K562 (cell line): ENCODE measurements at regions of chr14 and their contacts with region 1.

Region 1: DNA sequence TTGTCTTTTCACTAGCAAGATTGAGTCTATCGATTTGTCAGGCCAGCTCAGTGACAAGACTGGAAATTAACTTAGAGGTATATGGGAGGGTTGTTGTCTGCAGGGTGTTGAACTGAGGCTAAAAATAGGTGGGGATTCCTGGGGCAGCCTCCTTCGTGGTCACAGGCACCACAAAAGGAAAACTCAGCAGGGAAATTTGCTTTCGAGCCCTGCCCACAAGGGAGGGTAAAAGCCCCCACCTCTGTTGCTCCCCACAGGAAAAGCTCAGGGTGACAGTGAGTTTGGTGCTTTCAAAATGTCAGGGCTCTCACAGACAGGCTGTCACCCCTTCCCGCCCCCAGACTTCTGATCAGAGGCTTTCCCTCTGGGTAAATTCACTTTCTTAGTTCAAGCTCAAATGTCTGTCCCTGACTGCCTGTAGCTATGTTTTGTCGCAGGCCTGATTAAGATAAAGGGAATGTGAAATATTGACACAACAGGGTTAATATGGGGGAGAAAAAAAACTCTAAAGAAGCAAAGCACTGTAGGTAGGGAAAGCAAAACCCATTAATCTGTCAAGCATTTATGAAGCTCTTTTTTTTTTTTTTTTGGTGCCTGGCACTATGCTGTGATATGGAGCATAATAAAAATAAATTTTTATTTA is 11.7 kb upstream of the NFKBIA start:
- DNase-seq: no peak
- ATAC-seq: no peak
- H3K4me3 ChIP-seq: no peak overlapping the region
- H3K27ac ChIP-seq: no peak overlapping the region
- H3K4me1 ChIP-seq: peaks cover 0 to 4% of the 10 kb centered on the region in 2 experiments; a peak in 3 of 5 replicates
- H3K27me3 ChIP-seq: no peaks in the 10 kb centered on the region
- CTCF ChIP-seq: no peak
- EP300 ChIP-seq: no peak
- POLR2A ChIP-seq: no peak
- RAD21 ChIP-seq: no peak

Region 2: DNA sequence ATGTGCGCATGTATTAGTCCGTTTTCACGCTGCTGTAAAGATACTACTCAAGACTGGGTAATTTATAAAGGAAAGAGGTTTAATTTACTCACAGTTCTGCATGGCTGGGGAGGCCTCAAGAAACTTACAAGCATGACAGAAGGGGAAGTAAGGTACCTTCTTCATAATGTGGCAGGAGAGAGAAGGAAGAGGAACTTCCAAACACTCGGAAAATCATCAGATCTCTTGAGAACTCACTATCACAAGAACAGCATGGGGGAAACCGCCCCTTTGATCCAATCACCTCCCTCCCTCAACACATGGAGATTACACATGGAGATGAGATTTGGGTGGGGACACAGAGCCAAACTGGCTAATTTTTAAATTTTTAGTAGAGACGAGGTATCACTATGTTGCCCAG is 744.5 kb before region 1 on chr14:
- CTCF ChIA-PET with region 1: no interaction called
- POLR2A ChIA-PET with region 1: no interaction called
- in situ Hi-C with region 1: no loop called
- intact Hi-C with region 1: loop called (anchors 5 kb)
- DNase-seq: no peak
- ATAC-seq: no peak
- H3K4me3 ChIP-seq: no peak overlapping the region
- H3K27ac ChIP-seq: no peak overlapping the region
- H3K4me1 ChIP-seq: no peaks in the 10 kb centered on the region; a peak in 1 of 5 replicates
- H3K27me3 ChIP-seq: no peaks in the 10 kb centered on the region
- CTCF ChIP-seq: no peak
- EP300 ChIP-seq: no peak
- POLR2A ChIP-seq: no peak
- RAD21 ChIP-seq: no peak

Region 3: DNA sequence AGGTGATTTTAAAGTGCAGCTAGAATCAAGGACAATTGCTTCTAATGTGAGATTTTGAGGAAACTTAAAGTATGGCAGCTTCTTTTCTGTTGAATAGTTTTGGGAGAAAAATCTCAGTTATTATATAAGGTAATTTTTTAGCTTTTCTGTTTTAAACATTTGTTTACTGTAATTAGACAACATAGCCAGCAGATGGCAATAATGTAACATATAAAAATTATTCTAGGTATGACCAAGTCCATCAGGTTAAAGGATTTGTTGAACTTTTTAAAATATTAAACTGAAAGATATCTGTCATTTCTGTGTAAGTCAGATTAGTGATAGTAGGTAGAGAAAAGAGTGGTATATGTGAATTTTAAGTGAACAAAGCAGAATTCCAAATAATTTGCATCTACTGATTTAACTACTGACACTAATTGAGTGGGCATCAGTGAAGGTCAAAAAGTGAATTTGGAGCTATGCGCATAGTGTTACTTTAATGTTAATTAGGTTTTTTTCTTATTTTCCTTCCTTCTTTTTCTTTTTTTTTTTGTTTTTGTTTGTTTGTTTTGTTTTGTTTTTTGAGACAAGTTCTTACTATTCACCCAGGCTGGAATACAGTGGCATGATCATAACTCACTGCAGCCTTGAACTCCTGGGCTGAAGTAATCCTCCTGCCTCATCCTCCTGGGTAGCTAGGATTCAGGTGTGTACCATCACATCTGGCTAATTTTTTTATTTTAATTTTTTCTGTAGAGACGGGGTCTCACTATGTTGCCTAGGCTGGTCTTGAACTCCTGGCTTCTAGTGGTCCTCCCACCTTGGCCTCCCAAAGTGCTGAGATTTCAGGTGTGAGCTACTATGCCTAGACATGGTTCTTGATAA is 275.3 kb before region 1 on chr14:
- CTCF ChIA-PET with region 1: interaction called, 22 read pairs
- POLR2A ChIA-PET with region 1: interaction called, 4 read pairs
- in situ Hi-C with region 1: loop called (anchors 5 kb)
- intact Hi-C with region 1: no loop called
- DNase-seq: peak in 1 of 4 experiments; percentile 10
- ATAC-seq: no peak
- H3K4me3 ChIP-seq: no peak overlapping the region
- H3K27ac ChIP-seq: no peak overlapping the region
- H3K4me1 ChIP-seq: no peaks in the 10 kb centered on the region
- H3K27me3 ChIP-seq: no peaks in the 10 kb centered on the region
- CTCF ChIP-seq: peak in 2 of 3 experiments; percentile 15 to 47; a peak in 3 of 6 replicates
- EP300 ChIP-seq: no peak
- POLR2A ChIP-seq: no peak
- RAD21 ChIP-seq: peak; percentile 62 to 63

Region 4: DNA sequence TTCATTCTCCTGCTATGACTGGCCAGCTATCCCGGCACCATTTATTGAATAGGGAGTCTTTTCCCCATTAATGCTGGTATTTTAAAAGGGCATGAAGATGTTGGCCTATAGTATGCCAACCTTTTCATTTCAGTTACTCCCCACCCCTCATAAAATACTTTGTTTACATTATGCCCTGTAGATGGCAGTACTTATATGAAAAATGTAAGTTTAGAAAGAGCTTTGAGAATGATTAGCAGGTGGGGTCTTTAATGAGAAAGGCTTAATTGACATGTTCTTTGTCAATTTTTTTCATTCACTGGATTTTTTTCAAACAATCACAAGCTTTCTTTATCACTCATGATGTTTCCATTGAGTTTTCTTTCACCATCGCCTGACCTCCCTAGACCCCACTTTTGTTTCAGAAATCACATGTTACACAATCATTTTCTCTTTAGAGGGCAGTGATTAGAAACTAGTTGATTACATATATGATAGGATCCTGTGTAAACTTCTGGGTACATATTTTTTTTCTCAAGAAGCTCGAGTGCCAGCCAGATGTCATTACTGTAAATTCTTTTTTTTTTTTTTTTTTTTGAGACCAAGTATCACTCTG is 186.6 kb before region 1 on chr14:
- CTCF ChIA-PET with region 1: interaction called, 6 read pairs
- POLR2A ChIA-PET with region 1: no interaction called
- in situ Hi-C with region 1: no loop called
- intact Hi-C with region 1: loop called (anchors 5 kb)
- DNase-seq: peak; percentile 3 to 14 (median 14)
- ATAC-seq: no peak
- H3K4me3 ChIP-seq: no peak overlapping the region
- H3K27ac ChIP-seq: no peak overlapping the region
- H3K4me1 ChIP-seq: no peaks in the 10 kb centered on the region
- H3K27me3 ChIP-seq: no peaks in the 10 kb centered on the region
- CTCF ChIP-seq: peak; percentile 5 to 49 (median 29); a peak in 3 of 6 replicates
- EP300 ChIP-seq: no peak
- POLR2A ChIP-seq: no peak
- RAD21 ChIP-seq: peak; percentile 56 to 60

Region 5: DNA sequence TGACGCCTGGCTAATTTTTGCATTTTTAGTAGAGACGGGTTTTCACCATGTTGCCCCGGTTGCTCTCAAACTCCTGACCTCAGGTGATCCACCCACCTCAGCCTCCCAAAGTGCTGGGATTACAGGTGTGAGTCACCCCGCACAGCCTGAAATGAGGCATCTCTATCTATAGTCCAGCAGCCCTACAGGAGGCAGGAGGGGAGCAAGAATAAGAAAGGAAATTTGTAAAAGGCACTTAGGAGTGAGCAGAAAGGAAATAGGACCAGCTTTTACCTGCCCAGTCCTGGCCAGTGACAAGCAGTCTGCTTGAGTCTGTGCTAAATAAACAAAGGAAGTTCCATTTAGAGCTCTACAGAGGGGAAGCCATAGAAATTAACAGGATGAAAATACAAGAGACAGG is 139.1 kb before region 1 on chr14:
- CTCF ChIA-PET with region 1: no interaction called
- POLR2A ChIA-PET with region 1: no interaction called
- in situ Hi-C with region 1: no loop called
- intact Hi-C with region 1: no loop called
- DNase-seq: no peak
- ATAC-seq: no peak
- H3K4me3 ChIP-seq: no peak overlapping the region
- H3K27ac ChIP-seq: no peak overlapping the region
- H3K4me1 ChIP-seq: no peaks in the 10 kb centered on the region
- H3K27me3 ChIP-seq: no peaks in the 10 kb centered on the region
- CTCF ChIP-seq: no peak
- EP300 ChIP-seq: no peak
- POLR2A ChIP-seq: no peak
- RAD21 ChIP-seq: no peak

Region 6: GRCh38 chr14:35814371-35815005 is 398.3 kb after region 1 on chr14:
- CTCF ChIA-PET with region 1: no interaction called
- POLR2A ChIA-PET with region 1: no interaction called
- in situ Hi-C with region 1: no loop called
- intact Hi-C with region 1: loop called (anchors 10 kb)
- DNase-seq: peak; percentile 24 to 70 (median 28)
- ATAC-seq: peak; percentile 85
- H3K4me3 ChIP-seq: no peak overlapping the region
- H3K27ac ChIP-seq: no peak overlapping the region
- H3K4me1 ChIP-seq: no peaks in the 10 kb centered on the region; a peak in 1 of 5 replicates
- H3K27me3 ChIP-seq: no peaks in the 10 kb centered on the region
- CTCF ChIP-seq: peak; percentile 53 to 62 (median 54)
- EP300 ChIP-seq: no peak
- POLR2A ChIP-seq: no peak
- RAD21 ChIP-seq: peak in 1 of 2 experiments; percentile 24; a peak in 1 of 4 replicates